Heart left ventricle (tissue), 16 donors: ENCODE measurements at regions of chr22 and their contacts with region 1.

Region 1: GRCh38 chr22:18077639-18078328 is at the start of gene PEX26:
- DNase-seq: peak; percentile 95 to 97 (median 95)
- ATAC-seq: peak; percentile 96 to 99 (median 98)
- H3K4me3 ChIP-seq: peak within 1 kb of the TSS; percentile 66 to 99 (median 88)
- H3K27ac ChIP-seq: peak within 1 kb of the TSS; percentile 27 to 90 (median 87)
- H3K4me1 ChIP-seq: peaks cover 3 to 37% (median 26%) of the 10 kb centered on the region in 12 donors
- H3K27me3 ChIP-seq: no peaks in the 10 kb centered on the region
- CTCF ChIP-seq: no peak
- POLR2A ChIP-seq: peak in 1 of 2 donors; percentile 63
- total RNA-seq, gene PEX26: 15.8 to 27.3 (median 22.0) TPM

Region 2: GRCh38 chr22:17742527-17742902 is 335.3 kb before region 1 on chr22:
- intact Hi-C with region 1: loop called in 8 of 10 experiments (anchors 5 to 10 kb)
- DNase-seq: peak; percentile 51 to 75 (median 62)
- ATAC-seq: peak; percentile 47 to 73 (median 68)
- H3K4me3 ChIP-seq: no peak overlapping the region
- H3K27ac ChIP-seq: no peak overlapping the region
- H3K4me1 ChIP-seq: peaks cover 0 to 16% (median 3%) of the 10 kb centered on the region in 12 donors
- H3K27me3 ChIP-seq: no peaks in the 10 kb centered on the region
- CTCF ChIP-seq: peak; percentile 67 to 80 (median 75)
- POLR2A ChIP-seq: no peak

Region 3: DNA sequence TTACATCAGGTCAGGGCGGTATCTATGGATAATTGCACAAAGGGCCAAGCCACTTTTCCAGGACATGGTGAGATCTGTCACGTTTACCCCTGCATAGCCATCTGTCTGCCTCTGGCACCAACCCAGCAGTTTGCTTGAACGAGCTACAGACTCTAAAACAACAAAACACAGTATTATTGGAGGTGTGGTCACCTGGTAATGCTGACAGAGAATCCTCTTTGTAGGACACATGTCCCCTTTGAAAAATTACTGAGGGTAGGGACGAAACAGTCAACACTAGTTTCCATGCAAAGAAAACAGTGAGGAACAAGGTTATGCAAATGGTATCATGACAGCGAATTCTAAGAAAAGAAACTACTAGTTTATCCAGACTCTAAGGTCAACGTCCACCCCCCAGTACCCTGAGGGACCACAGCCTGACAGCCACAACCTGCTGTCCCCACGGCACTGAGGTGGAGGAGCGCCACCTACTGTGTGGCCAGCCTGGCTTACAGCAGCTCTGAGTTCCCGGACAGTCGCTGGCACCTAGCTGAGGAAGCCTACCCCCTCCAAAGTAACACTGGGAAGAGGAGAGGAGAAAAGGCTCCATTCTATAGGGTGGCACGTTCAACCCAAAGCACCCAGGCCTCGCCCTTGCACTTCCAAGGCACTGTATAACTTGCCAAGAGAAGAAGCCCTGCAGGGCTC is 186.2 kb before region 1 on chr22:
- intact Hi-C with region 1: loop called in 4 of 10 experiments (anchors 5 to 10 kb)
- DNase-seq: peak in 4 of 5 donors; percentile 61 to 82 (median 68)
- ATAC-seq: peak; percentile 62 to 82 (median 72)
- H3K4me3 ChIP-seq: no peak overlapping the region
- H3K27ac ChIP-seq: peak overlapping the region; percentile 7 to 91 (median 80)
- H3K4me1 ChIP-seq: peaks cover 0 to 49% (median 18%) of the 10 kb centered on the region in 12 donors
- H3K27me3 ChIP-seq: no peaks in the 10 kb centered on the region
- CTCF ChIP-seq: peak; percentile 31 to 72 (median 58)
- POLR2A ChIP-seq: no peak

Region 4: DNA sequence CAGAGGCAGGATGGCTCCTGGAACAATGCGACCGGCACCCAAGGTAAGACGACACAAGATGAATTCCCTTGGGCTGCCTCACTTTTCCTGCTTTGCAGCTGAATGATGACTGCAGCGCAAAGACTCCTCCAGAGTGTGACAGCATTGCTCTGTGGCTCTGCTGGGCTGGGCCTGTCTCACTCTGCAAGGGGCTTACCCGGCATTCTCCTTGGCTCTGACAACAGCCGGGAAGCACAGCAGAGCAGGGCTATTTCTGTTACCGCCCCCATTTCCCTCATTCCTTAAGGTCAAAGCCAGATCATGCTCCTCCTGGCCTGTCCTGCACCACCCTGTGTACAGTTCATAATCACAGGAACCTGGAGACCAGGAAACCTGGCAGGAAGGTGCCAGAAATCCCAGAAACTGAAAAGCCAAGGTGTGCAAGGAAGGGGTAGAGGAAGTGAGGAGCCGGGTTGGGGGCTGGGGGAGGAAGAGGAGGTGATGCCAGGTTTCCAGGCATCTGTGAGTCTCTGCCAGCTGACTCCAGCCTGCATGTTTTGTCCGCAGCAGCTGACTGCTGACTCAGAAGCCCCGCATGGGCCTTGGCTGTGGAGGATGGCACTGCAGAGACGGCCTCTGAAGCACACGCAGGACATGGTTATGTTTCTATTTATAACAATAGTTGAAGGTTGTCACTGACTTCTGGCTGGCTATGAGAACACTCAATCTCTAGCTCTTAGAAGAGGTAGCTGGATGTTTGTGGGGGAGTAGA is 167.0 kb before region 1 on chr22:
- intact Hi-C with region 1: loop called in 9 of 10 experiments (anchors 1 to 10 kb)
- DNase-seq: peak; percentile 79 to 92 (median 84)
- ATAC-seq: peak; percentile 88 to 94 (median 90)
- H3K4me3 ChIP-seq: peak overlapping the region in 5 of 12 donors; percentile 1 to 24 (median 14)
- H3K27ac ChIP-seq: peak overlapping the region; percentile 82 to 96 (median 88)
- H3K4me1 ChIP-seq: peaks cover 4 to 95% (median 54%) of the 10 kb centered on the region in 12 donors
- H3K27me3 ChIP-seq: no peaks in the 10 kb centered on the region
- CTCF ChIP-seq: peak; percentile 14 to 78 (median 54)
- POLR2A ChIP-seq: peak in 1 of 2 donors; percentile 13

Region 5: GRCh38 chr22:18001040-18001893 is 76.5 kb before region 1 on chr22:
- intact Hi-C with region 1: loop called in 6 of 10 experiments (anchors 2 to 5 kb)
- DNase-seq: peak; percentile 91 to 94 (median 92)
- ATAC-seq: peak; percentile 96 to 98 (median 97)
- H3K4me3 ChIP-seq: peak overlapping the region; percentile 65 to 99 (median 84)
- H3K27ac ChIP-seq: peak overlapping the region; percentile 86 to 98 (median 95)
- H3K4me1 ChIP-seq: peaks cover 0 to 37% (median 18%) of the 10 kb centered on the region in 12 donors
- H3K27me3 ChIP-seq: peaks cover 0 to 3% (median 0%) of the 10 kb centered on the region in 9 donors
- CTCF ChIP-seq: peak in 11 of 12 donors; percentile 19 to 67 (median 49)
- POLR2A ChIP-seq: peak in 1 of 2 donors; percentile 86

Region 6: GRCh38 chr22:19201869-19202798 is 1124.3 kb after region 1 on chr22:
- intact Hi-C with region 1: no loop called
- DNase-seq: no peak
- ATAC-seq: peak in 2 of 4 donors; percentile 18 to 54
- H3K4me3 ChIP-seq: no peak overlapping the region
- H3K27ac ChIP-seq: no peak overlapping the region
- H3K4me1 ChIP-seq: no peaks in the 10 kb centered on the region
- H3K27me3 ChIP-seq: no peaks in the 10 kb centered on the region
- CTCF ChIP-seq: no peak
- POLR2A ChIP-seq: no peak